Activated naive CD4-positive, alpha-beta T cell treated with anti-CD3 and anti-CD28 coated beads, Interleukin-2, amount 10 ng/mL, durations not matched to agents 7 days and 5 days (primary cell): ENCODE measurements at regions of chr1 and their contacts with region 1.

Region 1: GRCh38 chr1:111507411-111508201 is 4.2 kb upstream of the ADORA3 start:
- DNase-seq: peak; percentile 76
- H3K4me3 Mint-ChIP-seq: peak overlapping the region; percentile 61
- H3K27ac Mint-ChIP-seq: peak overlapping the region; percentile 95
- H3K4me1 Mint-ChIP-seq: peaks cover 58% of the 10 kb centered on the region
- H3K27me3 Mint-ChIP-seq: no peaks in the 10 kb centered on the region

Region 2: GRCh38 chr1:111448918-111449702 is 58.5 kb before region 1 on chr1 and contains the starts of genes ATP5PB and WDR77:
- CTCF ChIA-PET with region 1: interaction called, 12 read pairs
- DNase-seq: peak; percentile 95
- H3K4me3 Mint-ChIP-seq: peak within 1 kb of the TSS; percentile 100
- H3K27ac Mint-ChIP-seq: peak within 1 kb of the TSS; percentile 95
- H3K4me1 Mint-ChIP-seq: peaks cover 88% of the 10 kb centered on the region
- H3K27me3 Mint-ChIP-seq: no peaks in the 10 kb centered on the region

Region 3: DNA sequence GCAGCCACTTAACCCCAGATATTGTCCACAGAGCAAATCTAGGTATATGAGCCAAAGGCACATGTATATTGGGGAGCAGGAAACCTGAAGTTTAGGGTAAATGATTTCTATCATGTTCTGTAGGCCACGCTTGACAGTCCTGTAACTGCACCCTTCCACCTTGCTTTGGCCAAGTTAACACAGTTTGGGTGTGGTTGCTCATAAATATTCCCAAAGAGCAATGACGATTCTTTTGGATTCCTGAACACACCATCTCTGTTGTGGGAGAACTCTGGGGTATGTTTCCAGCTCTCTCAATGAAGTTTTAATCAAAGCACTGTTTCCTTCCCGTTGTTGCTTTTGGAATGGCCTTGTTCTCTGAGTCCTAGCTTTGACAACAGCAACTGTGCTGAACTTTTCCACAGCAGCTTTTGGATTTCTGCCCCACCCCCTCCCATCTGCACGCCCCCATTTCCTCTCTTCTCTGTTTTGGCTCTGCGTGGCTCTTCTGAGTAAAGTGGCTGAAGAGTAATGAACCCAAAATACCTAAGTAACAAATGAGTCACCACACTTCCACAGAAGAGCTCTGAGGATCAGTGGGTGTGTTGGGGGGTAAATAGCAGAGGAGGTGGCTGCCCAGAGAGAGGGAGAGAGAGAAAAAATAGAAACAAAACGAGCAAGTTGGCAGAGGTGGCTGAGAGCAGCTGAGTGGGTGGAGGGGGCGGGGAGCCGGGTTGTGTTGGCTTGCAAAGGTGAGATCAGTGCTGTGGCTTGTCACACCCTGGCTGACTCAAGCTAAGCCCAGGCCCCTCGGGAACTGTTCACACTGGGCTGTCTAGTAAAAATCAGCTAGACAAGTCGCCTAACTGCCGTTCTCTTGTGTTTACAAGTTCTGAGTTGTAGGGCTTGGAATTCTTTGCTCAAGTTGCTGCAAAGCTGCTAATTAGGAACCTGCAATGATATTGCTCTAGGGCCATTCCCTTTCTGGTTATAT is 85.1 kb after region 1 on chr1:
- CTCF ChIA-PET with region 1: interaction called, 19 read pairs
- DNase-seq: peak; percentile 94
- H3K4me3 Mint-ChIP-seq: peak overlapping the region; percentile 43
- H3K27ac Mint-ChIP-seq: peak overlapping the region; percentile 92
- H3K4me1 Mint-ChIP-seq: peaks cover 61% of the 10 kb centered on the region
- H3K27me3 Mint-ChIP-seq: no peaks in the 10 kb centered on the region

Region 4: DNA sequence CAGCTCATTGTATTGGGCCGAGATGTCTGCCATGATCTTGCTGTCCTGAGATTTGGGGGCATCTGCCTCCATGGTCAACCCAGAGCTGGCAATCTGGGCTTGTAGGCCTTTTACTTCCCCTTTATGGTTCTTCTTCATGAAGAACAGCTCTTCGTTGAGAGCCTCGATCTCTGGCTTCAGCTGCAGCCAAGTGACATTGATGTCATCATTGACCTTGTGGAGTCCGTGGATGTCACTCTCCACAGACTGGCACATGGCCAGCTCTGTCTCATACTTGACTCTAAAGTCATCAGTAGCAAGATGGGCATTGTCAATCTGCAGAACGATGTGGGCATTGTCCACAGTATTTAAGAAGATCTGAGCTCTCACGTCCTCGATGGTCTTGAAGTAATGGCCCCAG is 141.2 kb after region 1 on chr1:
- CTCF ChIA-PET with region 1: interaction called, 15 read pairs
- DNase-seq: no peak
- H3K4me3 Mint-ChIP-seq: no peak overlapping the region
- H3K27ac Mint-ChIP-seq: peak overlapping the region; percentile 65
- H3K4me1 Mint-ChIP-seq: peaks cover 70% of the 10 kb centered on the region
- H3K27me3 Mint-ChIP-seq: no peaks in the 10 kb centered on the region

Region 5: GRCh38 chr1:111709986-111710385 is 202.4 kb after region 1 on chr1:
- CTCF ChIA-PET with region 1: interaction called, 74 read pairs
- DNase-seq: no peak
- H3K4me3 Mint-ChIP-seq: no peak overlapping the region
- H3K27ac Mint-ChIP-seq: no peak overlapping the region
- H3K4me1 Mint-ChIP-seq: peaks cover 3% of the 10 kb centered on the region
- H3K27me3 Mint-ChIP-seq: no peaks in the 10 kb centered on the region

Region 6: DNA sequence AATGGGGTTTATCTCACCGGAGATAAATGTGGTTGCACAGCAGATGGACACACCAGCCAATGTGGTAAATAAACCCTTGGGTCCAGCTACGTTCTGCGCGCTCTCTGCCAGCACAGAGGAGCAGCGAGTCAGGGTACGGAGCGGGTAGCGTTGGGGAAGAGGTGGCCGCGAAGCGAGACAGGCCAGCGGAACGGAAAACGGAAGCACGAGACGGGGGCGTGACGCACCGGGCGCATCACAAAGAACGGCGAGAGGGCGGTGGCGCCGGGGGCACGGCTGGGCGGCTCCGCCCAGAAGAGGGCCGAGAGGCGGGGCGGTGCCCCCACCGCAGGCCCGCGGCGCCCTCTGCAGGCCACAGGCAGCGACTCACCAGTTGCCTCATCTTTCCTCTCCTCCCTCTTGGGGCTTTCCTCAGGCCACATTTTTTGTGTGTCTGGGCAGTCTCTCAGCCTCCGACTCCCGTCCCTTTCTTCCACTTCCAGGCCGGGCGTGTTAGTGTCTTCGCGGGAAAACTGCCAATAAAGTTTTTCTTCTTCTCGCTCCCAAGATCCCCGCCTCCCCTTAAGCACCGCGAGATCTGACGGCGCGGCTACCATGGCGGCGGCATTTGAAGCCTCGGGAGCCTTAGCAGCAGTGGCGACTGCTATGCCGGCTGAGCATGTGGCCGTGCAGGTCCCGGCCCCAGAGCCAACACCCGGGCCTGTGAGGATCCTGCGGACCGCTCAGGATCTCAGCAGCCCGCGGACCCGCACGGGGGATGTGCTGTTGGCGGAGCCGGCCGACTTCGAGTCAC is 247.9 kb after region 1 on chr1 and contains the start of gene DDX20:
- CTCF ChIA-PET with region 1: interaction called, 24 read pairs
- DNase-seq: peak; percentile 94
- H3K4me3 Mint-ChIP-seq: peak within 1 kb of the TSS; percentile 88
- H3K27ac Mint-ChIP-seq: peak within 1 kb of the TSS; percentile 96
- H3K4me1 Mint-ChIP-seq: peaks cover 56% of the 10 kb centered on the region
- H3K27me3 Mint-ChIP-seq: peaks cover 10% of the 10 kb centered on the region